ENCODE measurements at regions of chr1 and their contacts with region 1.

Region 1: DNA sequence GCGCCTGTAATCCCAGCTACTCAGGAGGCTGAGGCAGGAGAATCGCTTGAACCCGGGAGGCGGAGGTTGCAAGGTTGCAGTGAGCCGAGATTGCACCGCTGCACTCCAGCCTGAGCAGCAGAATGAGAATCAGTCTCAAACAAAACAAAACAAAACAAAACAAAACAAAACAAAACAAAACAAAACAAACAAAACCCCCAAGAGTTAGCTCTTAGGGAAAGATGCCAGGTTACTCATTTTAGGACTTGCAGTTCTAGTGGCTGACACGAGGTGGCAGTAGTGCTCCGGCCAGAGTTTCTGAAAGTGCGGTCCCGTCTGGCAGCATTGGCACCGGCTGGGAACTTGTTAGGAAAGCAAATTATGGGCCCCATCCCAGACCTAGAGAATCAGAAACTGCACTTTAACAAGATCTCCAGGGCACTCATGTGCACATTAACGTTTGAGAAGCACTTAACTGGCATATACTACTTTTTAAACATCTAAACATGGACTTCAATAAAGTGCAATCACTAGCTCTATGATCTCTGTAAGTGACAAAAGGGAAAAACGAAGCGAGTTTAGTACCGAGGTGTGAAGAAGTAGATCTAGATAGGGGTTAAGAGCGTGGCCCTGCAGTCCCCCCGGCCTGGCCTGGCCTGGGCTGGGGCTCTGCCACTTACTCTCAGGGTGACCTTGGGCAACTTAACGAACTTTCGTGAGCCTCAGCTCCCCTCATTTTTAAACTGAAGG is 41.9 kb upstream of the TNFRSF1B start:
- DNase-seq: peak; percentile 76 to 87 (median 80)
- ATAC-seq: peak; percentile 49 to 82 (median 76)
- H3K4me3 ChIP-seq: peak overlapping the region in 2 of 12 donors; percentile 16 to 23
- H3K27ac ChIP-seq: peak overlapping the region in 9 of 12 donors; percentile 6 to 75 (median 60)
- H3K4me1 ChIP-seq: peaks cover 4 to 30% (median 14%) of the 10 kb centered on the region in 12 donors
- H3K27me3 ChIP-seq: peaks cover 0 to 6% (median 0%) of the 10 kb centered on the region in 9 donors
- CTCF ChIP-seq: peak in 11 of 12 donors; percentile 90 to 99 (median 97)
- POLR2A ChIP-seq: peak in 1 of 2 donors; percentile 6

Region 2: GRCh38 chr1:12078938-12079861 is 45.7 kb before region 1 on chr1:
- intact Hi-C with region 1: no loop called
- DNase-seq: peak in 1 of 5 donors; percentile 20
- ATAC-seq: peak in 3 of 4 donors; percentile 30 to 54 (median 34)
- H3K4me3 ChIP-seq: no peak overlapping the region
- H3K27ac ChIP-seq: no peak overlapping the region
- H3K4me1 ChIP-seq: peaks cover 0 to 6% (median 0%) of the 10 kb centered on the region in 12 donors
- H3K27me3 ChIP-seq: peaks cover 0 to 13% (median 0%) of the 10 kb centered on the region in 9 donors
- CTCF ChIP-seq: peak; percentile 17 to 57 (median 36)
- POLR2A ChIP-seq: no peak

Region 3: GRCh38 chr1:12161662-12162458 is 37.0 kb after region 1 on chr1:
- intact Hi-C with region 1: loop called in 2 of 10 experiments (anchors 5 kb)
- DNase-seq: peak; percentile 92 to 97 (median 94)
- ATAC-seq: peak; percentile 92 to 98 (median 97)
- H3K4me3 ChIP-seq: peak overlapping the region in 3 of 12 donors; percentile 7 to 20 (median 17)
- H3K27ac ChIP-seq: peak overlapping the region; percentile 61 to 97 (median 80)
- H3K4me1 ChIP-seq: peaks cover 7 to 99% (median 23%) of the 10 kb centered on the region in 12 donors
- H3K27me3 ChIP-seq: peaks cover 0 to 3% (median 0%) of the 10 kb centered on the region in 9 donors
- CTCF ChIP-seq: no peak
- POLR2A ChIP-seq: peak in 1 of 2 donors; percentile 30

Region 4: DNA sequence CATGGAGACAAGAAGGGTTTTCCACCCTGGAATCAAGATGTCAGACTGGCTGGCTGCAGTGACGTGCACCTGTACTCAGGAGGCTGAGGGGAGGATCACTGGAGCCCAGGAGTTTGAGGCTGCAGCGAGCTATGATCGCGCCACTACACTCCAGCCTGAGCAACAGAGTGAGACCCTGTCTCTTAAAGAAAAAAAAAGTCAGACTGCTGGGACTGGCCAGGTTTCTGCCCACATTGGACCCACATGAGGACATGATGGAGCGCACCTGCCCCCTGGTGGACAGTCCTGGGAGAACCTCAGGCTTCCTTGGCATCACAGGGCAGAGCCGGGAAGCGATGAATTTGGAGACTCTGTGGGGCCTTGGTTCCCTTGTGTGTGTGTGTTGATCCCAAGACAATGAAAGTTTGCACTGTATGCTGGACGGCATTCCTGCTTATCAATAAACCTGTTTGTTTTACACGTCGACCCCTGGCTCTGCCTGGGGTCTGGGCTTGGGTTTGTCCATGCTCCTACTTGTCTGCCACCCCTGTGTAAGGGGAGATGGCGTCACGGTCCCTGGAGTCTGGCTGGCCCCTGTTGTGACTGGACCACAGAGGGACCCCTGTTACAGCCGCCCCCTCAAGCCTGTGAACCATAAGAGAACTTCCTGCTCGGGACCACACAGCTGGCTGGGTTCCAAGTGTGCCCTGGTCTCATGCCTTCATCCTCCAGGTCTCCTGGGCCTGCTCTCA is 84.1 kb after region 1 on chr1:
- intact Hi-C with region 1: loop called (anchors 1 to 2 kb)
- DNase-seq: peak; percentile 78 to 91 (median 83)
- ATAC-seq: peak; percentile 79 to 91 (median 90)
- H3K4me3 ChIP-seq: no peak overlapping the region
- H3K27ac ChIP-seq: peak overlapping the region in 2 of 12 donors; percentile 2 to 21
- H3K4me1 ChIP-seq: peaks cover 0 to 13% (median 6%) of the 10 kb centered on the region in 12 donors
- H3K27me3 ChIP-seq: no peaks in the 10 kb centered on the region
- CTCF ChIP-seq: peak; percentile 85 to 97 (median 92)
- POLR2A ChIP-seq: no peak